ENCODE measurements at regions of chr16 and their contacts with region 1.

Region 1: DNA sequence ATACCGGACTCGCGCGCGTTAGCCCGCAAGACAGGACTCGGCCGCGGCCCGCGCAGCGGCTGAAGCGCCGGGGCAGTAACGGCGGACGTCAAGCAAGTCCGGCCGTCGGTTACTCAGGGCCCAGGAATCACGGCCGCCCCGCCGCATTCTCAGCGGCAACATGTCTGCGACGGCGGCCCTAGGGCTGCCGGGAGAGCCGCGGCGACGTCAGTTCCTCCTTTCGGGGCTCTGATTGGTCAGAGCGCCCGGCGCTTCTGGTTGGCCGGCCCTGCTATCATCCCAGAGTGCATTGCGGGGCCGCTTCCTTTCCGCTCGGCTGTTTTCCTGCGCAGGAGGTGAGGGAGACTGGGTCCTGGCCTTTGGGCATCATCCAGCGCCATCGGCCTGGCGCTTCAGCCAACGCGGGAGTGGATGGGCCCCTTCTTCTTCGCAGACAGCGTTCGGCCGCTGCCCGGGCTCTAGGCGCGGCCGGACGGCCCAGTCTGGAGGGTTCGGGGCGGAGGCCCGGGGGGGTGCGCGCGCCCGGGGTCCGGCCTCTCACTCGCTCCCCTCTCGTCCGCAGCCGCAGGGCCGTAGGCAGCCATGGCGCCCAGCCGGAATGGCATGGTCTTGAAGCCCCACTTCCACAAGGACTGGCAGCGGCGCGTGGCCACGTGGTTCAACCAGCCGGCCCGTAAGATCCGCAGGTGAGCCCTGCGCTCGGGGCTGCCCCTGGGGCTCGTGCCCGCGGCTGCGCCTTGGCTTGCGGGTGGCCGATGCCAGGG is at the start of gene RPL13:
- DNase-seq: peak; percentile 97
- H3K4me3 ChIP-seq: peak within 1 kb of the TSS; percentile 98
- H3K27ac ChIP-seq: peak within 1 kb of the TSS; percentile 67
- H3K4me1 ChIP-seq: peaks cover 44% of the 10 kb centered on the region
- CTCF ChIP-seq: no peak
- total RNA-seq, gene RPL13: 7,440 and 9,791 TPM in 2 replicates

Region 2: GRCh38 chr16:89331371-89332109 is 229.0 kb before region 1 on chr16:
- CTCF ChIA-PET with region 1: no interaction called
- POLR2A ChIA-PET with region 1: no interaction called
- intact Hi-C with region 1: loop called (anchors 1 kb)
- DNase-seq: no peak
- H3K4me3 ChIP-seq: no peak overlapping the region
- H3K27ac ChIP-seq: peak overlapping the region; percentile 45
- H3K4me1 ChIP-seq: peaks cover 72% of the 10 kb centered on the region
- CTCF ChIP-seq: no peak

Region 3: GRCh38 chr16:89657442-89658220 is 97.1 kb after region 1 on chr16 and contains the starts of genes CHMP1A and SPATA33:
- CTCF ChIA-PET with region 1: no interaction called
- POLR2A ChIA-PET with region 1: no interaction called
- intact Hi-C with region 1: loop called (anchors 5 kb)
- DNase-seq: peak; percentile 94
- H3K4me3 ChIP-seq: peak within 1 kb of the TSS; percentile 98
- H3K27ac ChIP-seq: peak within 1 kb of the TSS; percentile 53
- H3K4me1 ChIP-seq: peaks cover 13% of the 10 kb centered on the region
- CTCF ChIP-seq: no peak
- total RNA-seq, gene CHMP1A: 53.1 and 57.5 TPM in 2 replicates
- total RNA-seq, gene SPATA33: 8.6 and 9.4 TPM in 2 replicates

Region 4: DNA sequence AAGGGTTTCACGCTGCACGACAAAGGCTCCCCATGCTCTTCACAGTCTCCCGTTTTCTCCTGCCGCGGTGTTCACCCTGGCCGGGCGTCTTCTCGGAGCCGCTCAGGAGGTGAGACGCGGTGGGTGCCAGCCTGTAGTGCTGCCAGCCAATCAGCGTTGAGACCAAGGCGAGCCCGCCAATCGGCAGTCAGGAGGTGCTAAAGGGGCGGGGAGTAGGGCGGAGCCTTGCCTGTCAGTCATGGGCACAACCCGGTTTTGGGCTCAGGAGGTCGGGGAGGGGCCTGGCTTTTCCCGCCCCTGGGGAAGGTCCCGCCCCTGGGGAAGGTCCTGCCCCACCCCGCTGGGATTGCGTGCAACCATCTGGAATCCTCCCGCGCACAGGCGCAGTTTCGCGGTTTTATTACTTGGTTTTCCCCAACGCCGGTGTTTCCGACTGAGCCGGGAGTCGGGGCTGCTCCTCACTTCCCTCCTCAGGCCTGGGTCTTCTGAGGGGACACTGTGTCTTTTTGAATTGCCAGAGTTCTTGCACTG is 516.7 kb after region 1 on chr16 and contains the start of gene PRDM7:
- CTCF ChIA-PET with region 1: no interaction called
- POLR2A ChIA-PET with region 1: no interaction called
- intact Hi-C with region 1: no loop called
- DNase-seq: peak; percentile 96
- H3K4me3 ChIP-seq: peak within 1 kb of the TSS; percentile 63
- H3K27ac ChIP-seq: no peak within 1 kb of the TSS
- H3K4me1 ChIP-seq: peaks cover 12% of the 10 kb centered on the region
- CTCF ChIP-seq: no peak
- total RNA-seq, gene PRDM7: not detected in 2 replicates

Measured in OCI-LY7 (cell line).